AG04449 (cell line): ENCODE measurements at regions of chr2 and their contacts with region 1.

Region 1: DNA sequence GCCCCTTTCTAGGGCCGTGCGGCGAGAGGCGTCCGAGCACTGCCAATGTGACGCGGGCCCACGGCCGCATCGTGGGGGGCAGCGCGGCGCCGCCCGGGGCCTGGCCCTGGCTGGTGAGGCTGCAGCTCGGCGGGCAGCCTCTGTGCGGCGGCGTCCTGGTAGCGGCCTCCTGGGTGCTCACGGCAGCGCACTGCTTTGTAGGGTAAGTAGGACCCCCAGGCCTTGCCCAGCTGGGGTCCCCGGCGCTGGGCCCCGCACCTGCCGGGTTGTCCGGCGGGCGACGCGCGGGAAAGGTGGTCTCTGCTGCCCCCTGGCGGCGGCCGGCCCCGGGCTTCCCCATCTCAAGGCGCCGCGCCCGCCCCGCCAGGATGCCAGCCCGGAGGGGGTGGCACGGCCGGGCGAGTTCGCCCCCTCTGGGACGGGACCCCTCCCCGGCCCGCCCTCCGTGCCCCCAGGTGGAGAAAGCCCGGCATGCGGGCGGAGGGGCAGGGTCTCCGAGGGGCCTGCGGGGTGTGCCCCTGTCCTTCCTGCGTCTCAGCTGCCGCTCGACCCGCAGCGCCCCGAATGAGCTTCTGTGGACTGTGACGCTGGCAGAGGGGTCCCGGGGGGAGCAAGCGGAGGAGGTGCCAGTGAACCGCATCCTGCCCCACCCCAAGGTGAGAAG is 1.9 kb downstream of the PRSS56 start:
- DNase-seq: no peak
- H3K4me3 ChIP-seq: no peak overlapping the region
- CTCF ChIP-seq: peak; percentile 74

Region 2: DNA sequence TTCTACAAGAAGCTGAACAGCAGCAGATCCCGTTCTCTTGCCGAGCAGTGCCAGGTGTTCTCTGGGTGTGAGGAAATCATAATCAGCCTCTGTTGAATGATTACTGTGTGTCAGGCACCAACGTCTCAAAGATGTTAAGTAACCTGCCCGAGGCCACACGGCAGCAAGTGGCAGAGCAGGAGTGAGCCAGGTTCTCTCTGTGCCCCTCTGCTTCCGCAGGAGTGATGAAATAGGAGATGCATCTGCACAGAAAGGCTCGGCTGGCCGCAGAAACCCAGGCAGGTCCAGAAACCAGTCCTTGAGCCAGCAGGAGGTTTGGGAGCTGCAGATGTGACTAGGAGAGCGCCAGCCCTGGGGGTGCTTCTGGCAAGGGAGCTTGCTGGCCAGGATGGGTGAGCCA is 667.4 kb before region 1 on chr2:
- CTCF ChIA-PET with region 1: interaction called, 11 read pairs
- POLR2A ChIA-PET with region 1: no interaction called
- DNase-seq: no peak
- H3K4me3 ChIP-seq: no peak overlapping the region
- CTCF ChIP-seq: no peak

Region 3: DNA sequence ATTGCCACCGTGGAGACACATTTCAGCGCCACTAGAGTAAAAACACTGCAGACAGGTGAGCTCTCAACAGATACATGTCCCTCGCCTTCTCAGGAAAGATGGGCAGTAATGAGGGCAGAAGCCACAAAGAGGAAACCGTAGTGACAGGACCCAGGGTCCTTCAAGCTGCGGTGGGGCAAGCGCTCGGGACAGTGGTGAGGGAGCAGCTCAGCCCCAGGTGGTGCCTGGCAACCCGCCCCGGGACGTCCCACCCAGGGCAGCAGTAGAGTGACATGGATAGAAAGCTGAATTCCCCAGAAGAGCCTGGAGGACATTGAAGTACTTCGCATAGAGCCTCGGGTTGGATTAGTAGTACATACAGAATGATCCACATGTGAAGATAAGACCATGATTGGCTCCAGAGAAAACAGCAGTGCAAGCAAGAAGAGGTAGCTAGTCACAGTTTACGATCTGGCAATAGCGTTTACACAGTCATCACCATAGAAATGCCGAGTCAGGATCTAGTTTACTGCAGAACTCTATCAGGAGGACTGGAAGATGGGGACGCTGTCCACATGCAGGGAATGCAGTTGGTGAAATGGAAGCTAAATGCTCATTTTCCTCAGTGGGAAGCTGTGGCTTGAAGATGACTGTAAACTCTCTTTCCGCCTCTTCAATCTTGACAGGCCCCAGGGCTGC is 180.9 kb before region 1 on chr2:
- CTCF ChIA-PET with region 1: no interaction called
- POLR2A ChIA-PET with region 1: no interaction called
- DNase-seq: no peak
- H3K4me3 ChIP-seq: no peak overlapping the region
- CTCF ChIP-seq: no peak

Region 4: DNA sequence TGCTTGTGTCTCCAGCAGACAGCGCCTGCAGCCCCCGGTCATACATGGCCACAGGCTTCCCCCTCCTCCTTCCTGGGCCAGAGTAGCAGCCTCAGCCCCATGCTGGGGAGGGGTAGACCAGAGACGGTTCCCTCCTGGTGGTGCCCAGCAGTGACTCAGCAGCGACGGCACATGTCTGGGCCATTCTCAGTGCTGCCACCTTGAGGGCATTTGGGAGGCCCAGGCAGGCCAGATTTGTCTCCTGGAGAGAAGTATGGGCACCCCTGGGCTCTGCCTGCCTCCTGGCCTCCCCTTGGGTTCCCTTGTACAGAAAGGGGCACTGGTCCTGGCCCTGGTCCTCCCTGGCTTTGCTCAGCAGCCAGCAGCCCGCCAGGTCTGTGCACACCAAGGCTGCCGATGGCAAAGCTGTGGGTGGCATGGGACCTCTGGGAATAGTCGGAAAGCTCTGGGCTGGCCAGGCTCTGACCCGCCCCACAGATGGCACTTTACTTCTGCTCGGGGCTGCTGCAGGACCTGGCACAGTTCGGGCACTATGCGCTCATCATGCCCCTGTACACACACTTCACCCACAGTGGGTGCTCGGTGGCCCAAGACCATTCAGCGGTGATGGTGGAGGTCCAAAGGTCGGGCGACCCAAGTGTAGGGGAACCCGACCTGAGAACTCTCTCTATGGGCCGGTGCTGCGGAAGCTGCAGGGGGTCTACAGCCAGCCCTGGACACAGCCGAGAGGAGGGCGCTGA is 77.5 kb before region 1 on chr2:
- CTCF ChIA-PET with region 1: interaction called, 38 read pairs
- POLR2A ChIA-PET with region 1: no interaction called
- DNase-seq: no peak
- H3K4me3 ChIP-seq: no peak overlapping the region
- CTCF ChIP-seq: peak; percentile 75

Region 5: DNA sequence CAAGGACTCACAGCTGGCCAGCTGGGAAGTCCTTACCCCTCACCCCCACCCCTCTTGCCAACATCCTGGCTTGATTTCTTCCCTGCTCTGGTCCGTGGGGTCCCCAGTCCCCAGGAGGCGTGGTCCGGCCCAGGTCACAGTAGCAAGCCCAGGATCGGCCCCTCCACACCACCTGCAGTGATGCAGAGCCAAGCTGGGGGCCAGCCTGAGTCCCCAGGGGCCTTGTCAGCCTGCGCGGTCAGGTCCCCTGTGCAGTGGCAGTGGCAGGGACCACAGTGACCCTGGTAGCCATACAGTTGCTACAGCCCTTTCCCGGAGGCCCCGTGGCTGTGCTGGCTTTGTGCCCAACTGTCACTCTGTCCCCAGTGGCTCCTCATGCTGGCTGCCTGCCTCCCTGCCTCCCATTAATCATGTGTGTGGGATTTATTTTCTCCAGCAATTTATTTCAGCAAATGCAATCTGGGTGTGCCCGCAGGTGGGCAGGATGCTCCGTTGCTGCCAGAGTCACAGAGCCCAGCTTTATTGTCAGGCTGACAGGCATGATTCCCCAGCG is 10.7 kb before region 1 on chr2:
- CTCF ChIA-PET with region 1: interaction called, 41 read pairs
- POLR2A ChIA-PET with region 1: no interaction called
- DNase-seq: no peak
- H3K4me3 ChIP-seq: no peak overlapping the region
- CTCF ChIP-seq: no peak

Region 6: DNA sequence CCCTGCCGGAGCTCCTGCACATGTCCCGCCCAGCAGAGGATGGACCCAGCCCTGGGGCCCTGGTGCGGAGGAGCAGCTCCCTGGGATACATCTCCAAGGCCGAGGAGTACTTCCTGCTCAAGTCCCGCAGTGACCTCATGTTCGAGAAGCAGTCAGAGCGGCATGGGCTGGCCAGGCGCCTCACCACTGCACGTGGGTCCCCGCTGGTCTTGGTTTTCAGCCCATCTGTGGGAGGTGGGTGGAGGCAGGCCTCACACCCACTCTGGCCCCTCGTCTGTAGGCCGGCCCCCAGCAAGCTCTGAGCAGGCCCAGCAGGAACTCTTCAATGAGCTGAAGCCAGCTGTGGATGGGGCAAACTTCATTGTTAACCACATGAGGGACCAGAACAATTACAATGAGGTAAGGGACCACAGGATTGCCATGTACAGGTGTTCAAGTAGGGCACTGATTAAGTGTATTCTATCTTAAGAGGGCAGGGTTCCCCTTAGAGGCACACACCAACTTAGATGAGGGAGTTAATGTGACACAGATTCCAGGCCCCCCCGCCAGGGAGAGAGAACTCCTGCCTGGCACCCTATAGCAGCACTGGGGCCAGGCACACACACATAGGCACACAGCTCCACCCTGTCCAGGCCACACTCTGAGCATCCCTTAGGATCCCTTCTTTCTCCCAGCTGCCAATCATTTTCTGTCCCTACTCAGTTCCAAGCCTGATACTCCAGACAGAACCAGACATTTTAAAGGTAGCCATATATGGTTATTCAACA is 12.0 kb after region 1 on chr2:
- CTCF ChIA-PET with region 1: interaction called, 21 read pairs
- POLR2A ChIA-PET with region 1: interaction called, 3 read pairs
- DNase-seq: no peak
- H3K4me3 ChIP-seq: no peak overlapping the region
- CTCF ChIP-seq: no peak